Activated CD8-positive, alpha-beta T cell treated with anti-CD3 and anti-CD28 coated beads for 36 hours (primary cell): ENCODE measurements at regions of chr16 and their contacts with region 1.

Region 1: GRCh38 chr16:29995911-29996772 is at the start of gene INO80E:
- DNase-seq: peak; percentile 99
- ATAC-seq: peak; percentile 97
- H3K4me3 Mint-ChIP-seq: peak within 1 kb of the TSS; percentile 96
- H3K27ac Mint-ChIP-seq: peak within 1 kb of the TSS; percentile 99
- H3K4me1 Mint-ChIP-seq: peaks cover 29% of the 10 kb centered on the region
- H3K27me3 Mint-ChIP-seq: no peaks in the 10 kb centered on the region
- CTCF ChIP-seq: no peak
- total RNA-seq, gene INO80E: 75.9 to 79.1 TPM

Region 2: GRCh38 chr16:29900102-29900887 is 95.8 kb before region 1 on chr16 and contains the start of gene ASPHD1:
- CTCF ChIA-PET with region 1: no interaction called
- POLR2A ChIA-PET with region 1: interaction called, 13 read pairs
- intact Hi-C with region 1: no loop called
- DNase-seq: peak; percentile 71
- ATAC-seq: peak; percentile 91
- H3K4me3 Mint-ChIP-seq: peak within 1 kb of the TSS; percentile 67
- H3K27ac Mint-ChIP-seq: no peak within 1 kb of the TSS
- H3K4me1 Mint-ChIP-seq: peaks cover 12% of the 10 kb centered on the region
- H3K27me3 Mint-ChIP-seq: peaks cover 22% of the 10 kb centered on the region
- CTCF ChIP-seq: no peak
- total RNA-seq, gene ASPHD1: 2.0 to 2.1 TPM

Region 3: DNA sequence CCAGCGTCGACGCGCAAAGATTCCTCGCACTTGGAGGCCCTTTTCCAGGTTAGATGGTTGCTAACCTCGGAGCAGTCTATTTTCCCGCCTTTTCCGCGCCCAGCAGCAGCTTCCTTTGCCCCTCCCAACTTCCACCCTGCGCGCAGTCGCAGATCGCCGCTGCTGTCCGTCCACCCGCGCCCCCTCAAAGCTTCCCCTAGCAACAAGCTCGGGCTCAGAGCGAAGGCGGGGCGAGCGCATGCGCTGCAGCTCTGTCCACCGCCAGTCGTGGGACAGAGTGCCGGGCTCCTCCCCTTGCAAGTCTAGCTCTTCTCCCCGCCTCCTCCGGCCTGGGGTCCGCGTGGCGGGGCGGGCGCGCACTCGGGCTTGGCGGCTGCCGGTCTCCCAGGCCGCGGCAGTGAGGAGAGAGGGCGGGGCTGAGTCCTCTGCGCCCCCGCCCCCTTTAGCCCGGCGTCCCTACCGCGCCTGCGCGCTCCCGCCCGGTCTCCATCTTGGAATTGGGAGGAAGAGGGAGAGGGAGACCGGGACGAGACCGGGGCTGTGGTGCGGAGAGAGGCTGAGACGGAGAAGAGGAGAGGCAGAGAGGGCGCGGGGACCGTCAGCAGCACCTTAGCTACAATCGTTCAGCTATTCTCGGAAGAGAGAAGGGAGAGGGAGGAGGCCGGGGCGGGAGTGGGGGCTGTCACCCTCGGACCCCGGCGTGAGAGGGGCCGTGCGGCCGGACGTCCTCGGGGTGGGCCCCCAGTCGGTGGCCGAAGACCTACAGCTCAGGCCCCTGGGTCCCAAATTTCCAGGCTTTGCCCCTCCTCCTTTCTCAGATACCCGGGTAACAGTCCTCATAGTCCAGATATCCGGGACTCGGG is 22.5 kb before region 1 on chr16 and contains the start of gene TAOK2:
- CTCF ChIA-PET with region 1: interaction called, 4 read pairs
- POLR2A ChIA-PET with region 1: interaction called, 74 read pairs
- intact Hi-C with region 1: no loop called
- DNase-seq: peak; percentile 98
- ATAC-seq: peak; percentile 99
- H3K4me3 Mint-ChIP-seq: peak within 1 kb of the TSS; percentile 80
- H3K27ac Mint-ChIP-seq: peak within 1 kb of the TSS; percentile 91
- H3K4me1 Mint-ChIP-seq: peaks cover 30% of the 10 kb centered on the region
- H3K27me3 Mint-ChIP-seq: no peaks in the 10 kb centered on the region
- CTCF ChIP-seq: no peak
- total RNA-seq, gene TAOK2: 25.0 to 25.9 TPM

Region 4: DNA sequence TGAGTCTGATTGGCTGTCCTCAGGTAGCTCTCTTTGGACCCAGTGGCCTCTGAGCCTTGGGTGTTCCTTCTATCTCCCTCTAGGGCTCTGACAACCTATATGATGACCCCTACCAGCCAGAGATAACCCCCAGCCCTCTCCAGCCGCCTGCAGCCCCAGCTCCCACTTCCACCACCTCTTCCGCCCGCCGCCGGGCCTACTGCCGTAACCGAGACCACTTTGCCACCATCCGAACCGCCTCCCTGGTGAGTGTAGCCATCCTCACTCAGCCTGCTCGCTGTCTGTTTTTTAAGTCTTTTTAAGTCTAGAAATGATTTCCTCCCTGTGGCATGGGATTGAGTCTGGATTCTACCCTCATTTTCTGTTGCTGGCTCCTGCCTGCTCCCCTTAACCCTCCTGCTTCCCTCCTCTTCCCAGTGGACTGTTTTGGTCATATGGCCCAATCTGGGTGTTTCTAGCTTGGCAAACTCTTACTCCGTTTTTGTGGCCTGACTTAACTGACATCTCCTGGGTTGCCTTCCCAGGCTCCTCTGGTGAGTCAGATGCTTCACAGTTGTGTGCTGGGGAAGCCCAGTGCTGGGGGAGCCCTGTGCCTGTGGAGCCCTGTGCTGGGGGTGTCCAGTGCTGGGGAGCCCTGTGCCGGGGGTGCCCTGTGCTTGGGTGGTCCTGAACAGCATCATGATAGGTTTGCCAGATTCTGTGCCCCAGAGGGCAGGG is 12.6 kb before region 1 on chr16:
- CTCF ChIA-PET with region 1: no interaction called
- POLR2A ChIA-PET with region 1: interaction called, 74 read pairs
- intact Hi-C with region 1: no loop called
- DNase-seq: no peak
- ATAC-seq: no peak
- H3K4me3 Mint-ChIP-seq: no peak overlapping the region
- H3K27ac Mint-ChIP-seq: no peak overlapping the region
- H3K4me1 Mint-ChIP-seq: no peaks in the 10 kb centered on the region
- H3K27me3 Mint-ChIP-seq: no peaks in the 10 kb centered on the region
- CTCF ChIP-seq: no peak